GM18951 (cell line): ENCODE measurements at regions of chr4 and their contacts with region 1.

Region 1: GRCh38 chr4:85747882-85748491 is 273.0 kb downstream of the ARHGAP24 start:
- POLR2A ChIP-seq: no peak

Region 2: GRCh38 chr4:85147439-85148076 is 600.4 kb before region 1 on chr4:
- in situ Hi-C with region 1: loop called (anchors 10 kb)
- POLR2A ChIP-seq: no peak

Region 3: DNA sequence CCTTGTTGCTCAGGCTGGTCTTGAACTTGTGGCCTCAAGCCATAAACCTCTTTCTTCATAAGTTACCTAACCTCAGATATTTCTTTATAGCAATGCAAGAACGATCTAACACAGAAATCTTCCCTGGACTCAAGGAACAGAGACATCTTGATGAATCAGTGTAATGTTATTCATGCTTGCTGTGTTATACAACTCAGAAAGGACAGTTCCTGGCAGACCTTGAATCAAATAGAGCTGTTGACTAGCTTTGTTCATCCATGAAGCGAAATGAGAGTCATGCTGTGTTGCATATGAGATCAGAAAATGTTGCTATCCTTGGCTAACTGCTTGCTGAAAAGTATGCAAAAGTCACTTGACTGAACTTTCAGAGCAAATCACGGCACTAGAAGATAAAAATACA is 345.6 kb before region 1 on chr4:
- in situ Hi-C with region 1: loop called (anchors 25 kb)
- POLR2A ChIP-seq: no peak

Region 4: GRCh38 chr4:86036736-86037135 is 288.7 kb after region 1 on chr4:
- in situ Hi-C with region 1: loop called (anchors 5 kb)
- POLR2A ChIP-seq: no peak